ENCODE measurements at regions of chr1 and their contacts with region 1.

Region 1: DNA sequence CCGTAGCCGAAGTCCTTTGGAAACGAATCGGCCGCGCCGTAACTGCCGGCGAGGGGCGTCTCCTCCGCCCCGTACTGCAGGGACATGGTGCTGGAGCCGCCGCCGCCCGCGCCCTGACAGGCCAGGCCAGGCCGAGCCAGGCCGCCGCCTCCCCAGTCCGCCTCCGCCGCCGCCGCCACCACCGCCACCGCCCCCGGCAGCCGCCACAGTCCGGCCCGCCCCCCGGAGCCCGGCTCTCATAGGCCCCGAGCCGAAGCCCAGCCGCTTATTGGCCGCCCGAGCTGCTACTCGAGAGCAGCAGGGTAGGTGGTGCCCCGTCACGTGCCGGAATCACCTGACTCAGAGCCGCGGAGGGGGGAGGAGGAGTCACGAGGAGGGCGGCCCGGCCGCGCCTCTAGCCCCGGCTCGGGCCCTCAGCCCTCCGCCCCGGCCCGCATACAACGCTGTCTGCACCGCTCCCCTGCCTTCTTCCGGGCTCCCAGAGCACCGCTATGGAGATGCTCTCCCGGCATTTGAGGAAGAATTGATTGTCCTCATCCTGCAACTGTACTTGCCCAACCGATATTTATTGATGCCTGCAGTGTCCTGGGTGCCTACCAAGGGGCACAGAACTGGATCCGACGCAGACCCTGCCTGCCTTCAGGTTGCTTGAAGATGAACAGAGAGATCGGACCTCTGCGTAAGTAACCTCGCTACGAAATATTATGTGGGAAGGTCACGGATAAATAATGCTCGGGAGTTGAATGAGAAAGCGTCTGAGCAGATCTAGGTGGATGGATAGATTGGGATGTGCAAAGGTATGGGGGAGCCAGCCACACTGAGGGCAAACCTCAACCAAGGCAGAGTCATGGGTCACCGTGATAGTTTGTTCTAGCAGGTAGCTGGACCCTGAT is at the start of gene RRAGC:
- DNase-seq: peak; percentile 98
- H3K4me3 ChIP-seq: peak within 1 kb of the TSS; percentile 91
- H3K27ac ChIP-seq: peak within 1 kb of the TSS; percentile 14
- H3K4me1 ChIP-seq: peaks cover 18% of the 10 kb centered on the region
- CTCF ChIP-seq: no peak
- total RNA-seq, gene RRAGC: 4.8 and 5.0 TPM in 2 replicates

Region 2: DNA sequence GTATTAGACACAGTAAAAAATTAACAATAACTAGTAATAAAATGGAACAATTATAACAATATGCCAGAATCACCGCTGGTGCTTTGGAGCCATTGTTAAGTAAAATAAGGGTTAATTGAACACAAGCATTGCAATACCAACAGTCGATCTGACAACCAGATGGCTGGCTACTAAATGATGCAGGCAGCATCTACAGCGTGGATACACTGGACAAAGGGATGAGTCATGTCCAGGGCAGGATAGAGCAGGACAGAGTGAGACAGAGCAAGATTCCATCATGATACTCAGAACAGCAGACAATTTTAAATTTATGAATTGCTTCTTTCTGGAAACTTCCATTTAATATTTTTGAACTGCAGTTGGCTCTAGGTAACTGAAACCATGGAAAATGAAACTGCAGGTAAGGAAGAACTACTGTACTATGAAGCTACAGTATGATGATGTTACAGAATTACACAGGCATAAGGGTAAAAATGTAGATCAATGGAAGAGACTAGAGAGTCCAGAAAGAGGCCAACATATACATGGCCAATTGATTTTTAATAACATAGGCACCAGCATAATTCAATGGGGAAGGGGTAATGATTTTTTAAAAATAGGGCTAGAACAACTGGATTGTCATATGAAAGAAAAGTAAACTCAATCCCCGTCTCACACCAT is 168.9 kb before region 1 on chr1:
- CTCF ChIA-PET with region 1: no interaction called
- POLR2A ChIA-PET with region 1: no interaction called
- intact Hi-C with region 1: no loop called
- DNase-seq: no peak
- H3K4me3 ChIP-seq: no peak overlapping the region
- H3K27ac ChIP-seq: no peak overlapping the region
- H3K4me1 ChIP-seq: no peaks in the 10 kb centered on the region
- CTCF ChIP-seq: no peak

Region 3: DNA sequence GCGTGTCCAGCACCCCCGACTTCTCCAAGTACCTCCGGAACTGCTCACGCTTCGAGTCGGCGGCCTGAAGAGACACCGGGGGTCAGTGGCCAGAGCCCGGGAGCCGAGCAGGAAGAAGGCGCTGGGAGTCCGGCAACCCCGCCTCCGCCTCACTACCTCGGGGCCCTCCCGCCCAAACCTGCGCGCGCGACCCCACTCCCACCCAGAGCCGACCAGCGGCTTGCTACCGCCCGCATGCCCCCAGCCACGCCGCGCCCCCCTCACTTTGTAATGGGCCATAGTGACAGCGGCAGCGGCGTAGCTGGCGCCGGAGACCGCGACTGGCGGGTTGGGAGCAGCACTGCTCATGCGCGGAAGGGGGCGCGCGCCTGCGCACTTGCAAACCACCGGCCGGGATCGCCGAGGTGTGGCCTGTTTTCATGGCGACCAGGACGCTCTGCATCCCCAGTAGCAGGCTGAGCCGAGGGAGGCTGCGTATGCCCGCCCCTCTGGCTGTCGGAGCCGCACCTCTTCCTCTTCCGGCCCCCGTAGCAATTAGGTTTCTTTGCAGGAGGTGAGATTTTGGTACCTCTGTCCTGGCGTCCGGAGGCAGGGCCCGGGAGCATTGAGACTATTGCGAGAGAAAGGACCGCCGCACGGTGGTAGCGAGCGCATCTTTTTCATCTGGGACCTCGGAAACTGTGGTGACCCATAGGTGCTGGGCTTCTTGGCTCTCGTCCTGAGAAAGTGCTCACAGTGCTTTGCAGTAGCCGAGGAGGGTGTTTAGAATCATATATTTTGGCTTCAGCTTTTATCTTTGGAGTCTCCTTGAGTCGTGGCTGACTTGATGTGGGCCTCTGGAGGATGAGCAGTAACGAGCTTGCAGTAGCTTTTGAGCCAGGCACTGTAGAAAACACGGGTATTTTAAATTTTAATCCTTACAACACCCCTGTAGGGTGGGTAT is 13.5 kb after region 1 on chr1 and contains the start of gene MYCBP:
- CTCF ChIA-PET with region 1: no interaction called
- POLR2A ChIA-PET with region 1: interaction called, 5 read pairs
- intact Hi-C with region 1: loop called (anchors 2 kb)
- DNase-seq: peak; percentile 97
- H3K4me3 ChIP-seq: peak within 1 kb of the TSS; percentile 94
- H3K27ac ChIP-seq: peak within 1 kb of the TSS; percentile 29
- H3K4me1 ChIP-seq: peaks cover 19% of the 10 kb centered on the region
- CTCF ChIP-seq: no peak; the same call in 1 of the 2 replicates
- total RNA-seq, gene MYCBP: 21.5 and 25.2 TPM in 2 replicates

Region 4: DNA sequence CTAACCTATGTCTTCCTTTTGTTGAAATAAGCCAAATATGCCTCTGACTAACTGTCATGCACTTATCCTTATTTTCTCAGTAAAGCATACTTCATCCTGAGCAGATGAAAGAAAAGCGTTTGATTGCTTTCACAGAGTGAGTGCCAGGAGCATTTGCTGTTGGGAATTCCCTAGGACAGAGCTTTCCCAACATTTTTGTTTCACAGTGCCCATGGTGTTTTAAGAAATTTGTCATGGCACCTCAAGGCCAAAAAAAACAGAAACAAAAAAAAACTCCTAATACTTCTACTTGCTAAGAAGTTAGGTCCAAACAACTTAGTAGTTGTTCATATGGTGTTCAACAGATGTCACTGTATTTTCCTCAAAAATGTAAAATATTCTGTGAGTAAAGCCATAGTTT is 510.8 kb after region 1 on chr1:
- CTCF ChIA-PET with region 1: no interaction called
- POLR2A ChIA-PET with region 1: no interaction called
- intact Hi-C with region 1: no loop called
- DNase-seq: no peak
- H3K4me3 ChIP-seq: no peak overlapping the region
- H3K27ac ChIP-seq: no peak overlapping the region
- H3K4me1 ChIP-seq: no peaks in the 10 kb centered on the region
- CTCF ChIP-seq: no peak

Measured in OCI-LY7 (cell line).